Heart right ventricle (tissue), 16 donors: ENCODE measurements at regions of chr6 and their contacts with region 1.

Region 1: GRCh38 chr6:6736791-6737654 is 148.5 kb downstream of the LY86 start:
- DNase-seq: peak; percentile 73 to 83
- ATAC-seq: peak; percentile 77 to 91 (median 88)
- H3K4me3 ChIP-seq: peak overlapping the region in 9 of 10 donors; percentile 4 to 59 (median 47)
- H3K27ac ChIP-seq: peak overlapping the region; percentile 58 to 88 (median 78)
- H3K4me1 ChIP-seq: peaks cover 0 to 74% (median 13%) of the 10 kb centered on the region in 9 donors
- H3K27me3 ChIP-seq: no peaks in the 10 kb centered on the region
- CTCF ChIP-seq: no peak

Region 2: GRCh38 chr6:6438286-6438685 is 298.7 kb before region 1 on chr6:
- intact Hi-C with region 1: no loop called
- DNase-seq: no peak
- ATAC-seq: no peak
- H3K4me3 ChIP-seq: no peak overlapping the region
- H3K27ac ChIP-seq: no peak overlapping the region
- H3K4me1 ChIP-seq: peaks cover 0 to 2% (median 0%) of the 10 kb centered on the region in 9 donors
- H3K27me3 ChIP-seq: no peaks in the 10 kb centered on the region
- CTCF ChIP-seq: no peak

Region 3: GRCh38 chr6:6758915-6759654 is 22.1 kb after region 1 on chr6:
- intact Hi-C with region 1: no loop called
- DNase-seq: peak in 1 of 2 donors; percentile 87
- ATAC-seq: peak; percentile 84 to 97 (median 91)
- H3K4me3 ChIP-seq: peak overlapping the region in 6 of 10 donors; percentile 11 to 34 (median 16)
- H3K27ac ChIP-seq: peak overlapping the region in 8 of 10 donors; percentile 18 to 82 (median 62)
- H3K4me1 ChIP-seq: peaks cover 0 to 18% (median 14%) of the 10 kb centered on the region in 9 donors
- H3K27me3 ChIP-seq: no peaks in the 10 kb centered on the region
- CTCF ChIP-seq: peak; percentile 33 to 68 (median 62)

Region 4: DNA sequence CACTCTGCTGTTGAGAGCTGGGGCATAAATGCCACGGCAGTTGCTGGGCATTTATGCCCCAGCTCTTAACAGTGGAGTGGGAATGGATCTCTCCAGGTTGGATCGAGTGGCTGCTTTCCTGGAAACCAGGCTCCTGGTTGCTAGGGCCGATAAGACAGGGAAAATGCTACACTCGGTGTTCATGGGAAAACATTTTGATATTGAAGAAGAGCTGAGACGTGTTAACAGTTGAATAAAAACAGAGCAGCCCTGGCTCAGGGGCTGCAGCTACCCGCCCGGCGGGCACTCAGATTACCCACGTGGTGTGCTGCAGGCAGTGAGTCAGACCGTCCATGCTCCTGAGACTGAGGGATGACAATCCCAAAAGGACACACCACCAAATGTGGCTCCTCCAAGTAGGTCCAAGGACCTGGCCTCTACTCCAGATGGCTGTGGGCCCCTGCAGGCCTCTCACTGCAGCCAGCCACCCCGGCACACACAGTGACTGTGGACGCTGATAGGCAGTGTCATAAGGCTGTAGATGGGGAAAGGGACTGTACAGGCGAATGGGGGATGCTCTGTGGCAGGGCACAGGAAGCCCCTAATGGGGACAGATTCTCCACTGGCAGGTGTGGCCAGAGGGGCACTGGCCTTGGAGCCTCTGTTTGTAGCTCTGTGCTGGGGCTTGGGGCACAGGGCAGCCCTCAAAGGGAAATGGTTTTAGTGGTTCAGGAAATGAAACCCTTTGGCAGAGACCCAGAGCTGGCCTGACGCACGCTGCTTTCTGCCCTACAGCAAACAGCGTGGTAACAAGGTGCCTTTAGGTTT is 89.3 kb after region 1 on chr6:
- intact Hi-C with region 1: loop called in 1 of 10 experiments (anchors 5 kb)
- DNase-seq: peak; percentile 45 to 60
- ATAC-seq: peak; percentile 75 to 94 (median 88)
- H3K4me3 ChIP-seq: no peak overlapping the region
- H3K27ac ChIP-seq: peak overlapping the region; percentile 46 to 90 (median 77)
- H3K4me1 ChIP-seq: peaks cover 4 to 44% (median 22%) of the 10 kb centered on the region in 9 donors
- H3K27me3 ChIP-seq: no peaks in the 10 kb centered on the region
- CTCF ChIP-seq: no peak

Region 5: DNA sequence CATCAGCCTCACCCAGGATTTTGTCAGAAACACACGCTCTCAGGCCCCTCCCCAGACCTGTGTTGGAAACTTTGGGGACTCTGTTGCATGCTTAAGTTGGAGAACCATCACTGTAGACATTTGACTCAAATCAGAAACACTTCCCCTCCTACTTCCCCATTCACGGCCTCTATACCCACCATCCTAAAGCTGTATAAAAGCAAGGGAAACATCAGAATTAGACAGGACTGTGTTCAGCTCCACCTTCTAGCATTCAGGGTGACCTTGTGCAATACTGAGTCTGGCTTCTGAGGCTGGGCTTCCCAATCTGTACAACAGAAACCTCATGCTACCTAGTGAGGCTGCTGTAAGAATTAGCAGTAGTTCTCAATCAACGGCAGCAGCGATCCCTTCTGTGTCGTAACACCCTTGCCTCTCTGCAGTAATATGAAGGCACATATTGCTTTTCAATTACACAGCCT is 103.8 kb after region 1 on chr6:
- intact Hi-C with region 1: no loop called
- DNase-seq: no peak
- ATAC-seq: peak in 3 of 8 donors; percentile 29 to 42 (median 31)
- H3K4me3 ChIP-seq: no peak overlapping the region
- H3K27ac ChIP-seq: peak overlapping the region in 1 of 10 donors; percentile 10
- H3K4me1 ChIP-seq: peaks cover 0 to 15% (median 0%) of the 10 kb centered on the region in 9 donors
- H3K27me3 ChIP-seq: no peaks in the 10 kb centered on the region
- CTCF ChIP-seq: no peak

Region 6: GRCh38 chr6:6890400-6890858 is 153.4 kb after region 1 on chr6:
- intact Hi-C with region 1: loop called in 5 of 10 experiments (anchors 5 to 10 kb)
- DNase-seq: peak; percentile 48 to 62
- ATAC-seq: peak; percentile 30 to 72 (median 52)
- H3K4me3 ChIP-seq: peak overlapping the region in 1 of 10 donors; percentile 0
- H3K27ac ChIP-seq: peak overlapping the region in 8 of 10 donors; percentile 7 to 85 (median 78)
- H3K4me1 ChIP-seq: peaks cover 9 to 66% (median 36%) of the 10 kb centered on the region in 9 donors
- H3K27me3 ChIP-seq: no peaks in the 10 kb centered on the region
- CTCF ChIP-seq: no peak

Region 7: GRCh38 chr6:6975459-6976111 is 238.6 kb after region 1 on chr6:
- intact Hi-C with region 1: loop called in 1 of 10 experiments (anchors 5 kb)
- DNase-seq: peak in 1 of 2 donors; percentile 69
- ATAC-seq: peak; percentile 79 to 95 (median 90)
- H3K4me3 ChIP-seq: no peak overlapping the region
- H3K27ac ChIP-seq: peak overlapping the region; percentile 24 to 79 (median 69)
- H3K4me1 ChIP-seq: peaks cover 0 to 19% (median 13%) of the 10 kb centered on the region in 9 donors
- H3K27me3 ChIP-seq: no peaks in the 10 kb centered on the region
- CTCF ChIP-seq: no peak

Region 8: DNA sequence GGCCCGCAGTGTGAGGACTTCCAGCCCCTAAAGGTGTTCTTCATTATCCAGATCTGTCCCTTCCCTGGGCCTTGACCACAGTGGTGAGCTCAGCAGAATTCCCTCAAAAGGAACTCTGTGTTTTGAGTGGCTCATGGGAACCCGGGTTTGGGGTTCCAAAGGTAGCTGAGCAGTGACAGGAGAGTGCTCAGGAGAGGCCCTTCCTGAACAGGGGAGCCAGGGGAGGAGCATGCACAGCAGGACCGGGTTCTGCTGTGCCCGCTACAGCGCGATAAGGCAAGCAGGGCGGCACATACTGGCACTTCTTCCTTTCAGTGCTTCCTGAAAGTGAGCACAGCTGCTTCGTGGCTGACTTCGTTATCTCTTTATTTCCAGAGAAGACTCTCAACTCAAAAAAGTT is 487.7 kb after region 1 on chr6:
- intact Hi-C with region 1: loop called in 1 of 10 experiments (anchors 5 kb)
- DNase-seq: no peak
- ATAC-seq: peak in 7 of 8 donors; percentile 25 to 93 (median 72)
- H3K4me3 ChIP-seq: no peak overlapping the region
- H3K27ac ChIP-seq: peak overlapping the region in 9 of 10 donors; percentile 5 to 76 (median 42)
- H3K4me1 ChIP-seq: peaks cover 16 to 46% (median 35%) of the 10 kb centered on the region in 9 donors
- H3K27me3 ChIP-seq: no peaks in the 10 kb centered on the region
- CTCF ChIP-seq: no peak